ENCODE measurements at regions of chr5 and their contacts with region 1.

Region 1: DNA sequence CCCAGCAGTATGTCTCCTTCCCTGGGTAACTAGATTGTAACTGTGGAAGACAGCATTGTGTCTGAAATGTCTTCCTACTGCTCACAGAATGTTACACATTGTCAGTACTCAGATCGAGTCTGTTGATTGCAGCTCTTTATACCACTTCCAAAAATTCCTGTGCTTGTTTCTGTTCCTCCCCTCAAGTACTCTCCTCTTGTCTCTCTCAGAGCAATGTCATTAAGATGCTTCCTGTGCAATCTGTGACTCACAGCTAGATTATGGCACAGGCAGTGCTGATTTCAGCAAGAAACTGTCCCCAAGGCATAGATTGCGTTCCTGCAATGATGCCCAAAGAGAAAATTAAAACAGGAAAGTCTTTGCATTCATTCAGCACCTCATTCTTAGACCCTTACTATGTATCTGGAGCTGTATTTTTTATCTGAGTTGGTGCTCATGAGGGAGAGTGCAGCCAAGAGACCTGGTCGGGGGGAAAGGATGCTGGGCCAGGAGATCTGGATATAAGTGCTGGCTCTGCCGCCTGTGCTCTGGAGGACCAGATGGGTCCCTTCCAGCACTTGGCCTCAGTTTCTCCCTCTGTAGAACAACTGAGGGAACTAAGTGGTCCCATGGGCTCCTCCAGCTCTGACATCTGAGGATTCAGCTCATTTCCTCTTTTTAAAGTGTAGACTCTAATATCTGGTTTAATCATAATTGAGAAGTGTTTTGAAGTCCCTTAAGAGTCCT is 40.8 kb upstream of the GNPDA1 start:
- H3K4me3 Mint-ChIP-seq: peak overlapping the region; percentile 13
- H3K27ac Mint-ChIP-seq: peak overlapping the region; percentile 94
- H3K4me1 Mint-ChIP-seq: peaks cover 45% of the 10 kb centered on the region
- H3K27me3 Mint-ChIP-seq: no peaks in the 10 kb centered on the region

Region 2: DNA sequence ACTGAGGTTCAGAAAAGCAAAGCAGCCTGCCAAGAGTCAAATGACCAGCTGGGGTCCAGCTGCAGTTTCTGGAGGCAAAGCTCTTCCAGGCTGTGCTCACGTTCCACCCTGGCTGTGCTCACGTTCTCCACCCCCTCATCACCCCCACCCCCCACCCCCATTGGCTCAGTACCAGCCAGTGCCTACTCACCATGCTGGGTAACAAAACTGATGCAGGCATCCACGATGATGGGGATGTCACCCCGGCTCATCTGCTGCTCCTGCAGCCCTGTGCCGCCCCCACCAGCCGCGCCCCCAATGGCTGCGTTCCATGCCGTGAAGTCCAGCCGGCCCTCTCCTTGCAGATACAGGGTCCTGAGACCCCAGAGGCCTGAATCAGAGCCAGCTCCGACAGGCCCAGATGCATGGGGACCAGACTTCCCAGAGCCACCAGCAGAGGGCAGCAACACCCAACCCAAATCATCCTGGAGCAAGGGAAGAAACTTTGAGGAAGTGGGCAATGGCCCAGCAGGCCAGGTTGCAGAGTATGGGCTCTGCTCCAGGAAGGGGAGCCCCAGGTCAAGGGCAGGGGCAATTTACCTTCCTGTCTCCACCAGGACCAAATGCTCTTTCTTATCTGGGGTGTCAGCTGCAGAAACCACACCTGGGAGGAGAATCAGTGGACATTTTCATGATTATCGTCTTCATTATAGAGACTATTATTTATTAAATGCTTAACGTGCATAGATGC is 388.7 kb before region 1 on chr5:
- intact Hi-C with region 1: no loop called
- H3K4me3 Mint-ChIP-seq: no peak overlapping the region
- H3K27ac Mint-ChIP-seq: no peak overlapping the region
- H3K4me1 Mint-ChIP-seq: peaks cover 11% of the 10 kb centered on the region
- H3K27me3 Mint-ChIP-seq: no peaks in the 10 kb centered on the region

Region 3: GRCh38 chr5:142012792-142013388 is 40.7 kb before region 1 on chr5 and contains the start of gene GNPDA1:
- intact Hi-C with region 1: loop called (anchors 5 kb)
- H3K4me3 Mint-ChIP-seq: peak within 1 kb of the TSS; percentile 81
- H3K27ac Mint-ChIP-seq: peak within 1 kb of the TSS; percentile 94
- H3K4me1 Mint-ChIP-seq: peaks cover 59% of the 10 kb centered on the region
- H3K27me3 Mint-ChIP-seq: no peaks in the 10 kb centered on the region

Region 4: DNA sequence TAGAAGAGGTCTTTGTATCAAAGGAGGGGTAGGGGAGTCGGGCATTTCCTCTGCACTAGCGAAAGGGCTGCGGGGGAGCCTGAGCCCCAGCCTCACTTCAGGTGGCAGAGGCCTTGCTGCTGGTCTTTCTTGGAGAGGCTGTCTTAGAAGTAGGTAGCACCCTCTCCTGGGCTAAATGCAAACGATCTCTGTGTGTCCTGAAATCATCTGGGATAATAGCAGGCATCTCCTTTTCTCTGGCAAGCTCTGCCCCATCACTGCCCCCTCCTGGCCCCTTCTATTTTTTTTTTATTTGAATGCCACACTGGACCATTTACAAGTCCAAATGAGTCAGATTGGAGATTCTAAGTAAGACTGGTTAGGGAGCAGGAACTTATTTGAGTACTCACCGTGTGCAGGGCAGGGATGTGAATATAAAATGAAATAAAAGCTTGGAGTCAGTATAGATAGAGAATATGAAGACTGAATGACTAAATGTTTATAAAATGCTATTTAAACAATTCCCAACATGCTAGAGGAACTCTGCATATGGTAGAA is 495.2 kb after region 1 on chr5:
- intact Hi-C with region 1: no loop called
- H3K4me3 Mint-ChIP-seq: no peak overlapping the region
- H3K27ac Mint-ChIP-seq: no peak overlapping the region
- H3K4me1 Mint-ChIP-seq: peaks cover 5% of the 10 kb centered on the region
- H3K27me3 Mint-ChIP-seq: peaks cover 58% of the 10 kb centered on the region

Measured in dendritic cell treated with granulocyte-macrophage colony-stimulating factor and Interleukin-4, amounts not matched to agents 40 ng/mL and 50 ng/mL, for 4 days (primary cell).